ENCODE measurements at regions of chr13 and their contacts with region 1.

Region 1: GRCh38 chr13:31199849-31200636 is at the start of gene B3GLCT:
- DNase-seq: peak; percentile 84
- H3K4me3 Mint-ChIP-seq: peak within 1 kb of the TSS; percentile 77
- H3K27ac Mint-ChIP-seq: peak within 1 kb of the TSS; percentile 78
- H3K4me1 Mint-ChIP-seq: peaks cover 26% of the 10 kb centered on the region
- H3K27me3 Mint-ChIP-seq: no peaks in the 10 kb centered on the region
- total RNA-seq, gene B3GLCT: 2.6 to 2.8 TPM

Region 2: GRCh38 chr13:29595380-29596063 is 1604.5 kb before region 1 on chr13 and contains the start of gene SLC7A1:
- CTCF ChIA-PET with region 1: no interaction called
- POLR2A ChIA-PET with region 1: no interaction called
- intact Hi-C with region 1: loop called (anchors 10 kb)
- DNase-seq: peak; percentile 90
- H3K4me3 Mint-ChIP-seq: peak within 1 kb of the TSS; percentile 89
- H3K27ac Mint-ChIP-seq: peak within 1 kb of the TSS; percentile 97
- H3K4me1 Mint-ChIP-seq: peaks cover 45% of the 10 kb centered on the region
- H3K27me3 Mint-ChIP-seq: peaks cover 1% of the 10 kb centered on the region
- total RNA-seq, gene SLC7A1: 106 to 114 TPM

Region 3: DNA sequence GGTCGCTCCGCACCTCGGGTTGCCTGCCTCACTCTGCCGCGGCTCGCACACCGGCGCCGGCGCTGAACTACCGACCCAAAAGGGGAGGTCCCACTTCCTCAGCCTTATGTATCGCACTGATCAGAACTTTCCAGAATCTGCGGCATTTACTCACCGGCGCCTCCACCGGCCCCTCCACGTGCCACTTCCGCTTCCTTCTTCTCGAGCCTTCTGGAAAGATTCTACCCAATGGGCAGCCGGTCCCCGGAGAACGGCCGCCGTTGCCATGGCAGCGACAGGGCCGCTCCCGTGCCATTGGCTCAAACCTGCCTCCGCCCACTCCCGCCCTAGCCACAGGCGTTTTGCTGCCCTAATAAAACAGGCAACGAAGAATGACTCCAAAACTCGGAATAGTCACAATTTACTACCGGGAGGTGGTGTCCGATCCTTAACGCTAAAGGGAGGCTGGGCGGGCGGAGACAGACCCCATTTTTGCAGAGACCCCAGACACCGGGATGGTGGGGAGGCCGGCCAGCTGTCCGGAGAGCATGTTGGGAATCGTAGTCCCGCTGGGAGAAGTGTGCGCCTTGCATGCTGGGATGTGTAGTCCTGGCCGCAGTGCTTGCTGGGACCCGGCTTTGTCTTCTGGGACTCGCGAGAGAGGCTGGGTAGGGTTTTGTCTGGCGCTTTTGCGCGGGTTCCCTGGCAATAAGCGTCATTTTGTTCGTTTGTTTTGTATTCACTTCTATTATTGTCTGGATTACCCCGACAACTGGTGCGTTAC is 38.0 kb before region 1 on chr13 and contains the start of gene HSPH1:
- CTCF ChIA-PET with region 1: interaction called, 3 read pairs
- POLR2A ChIA-PET with region 1: no interaction called
- intact Hi-C with region 1: loop called (anchors 1 kb)
- DNase-seq: peak; percentile 99
- H3K4me3 Mint-ChIP-seq: peak within 1 kb of the TSS; percentile 92
- H3K27ac Mint-ChIP-seq: peak within 1 kb of the TSS; percentile 99
- H3K4me1 Mint-ChIP-seq: peaks cover 35% of the 10 kb centered on the region
- H3K27me3 Mint-ChIP-seq: no peaks in the 10 kb centered on the region
- total RNA-seq, gene HSPH1: 214 to 221 TPM

Region 4: DNA sequence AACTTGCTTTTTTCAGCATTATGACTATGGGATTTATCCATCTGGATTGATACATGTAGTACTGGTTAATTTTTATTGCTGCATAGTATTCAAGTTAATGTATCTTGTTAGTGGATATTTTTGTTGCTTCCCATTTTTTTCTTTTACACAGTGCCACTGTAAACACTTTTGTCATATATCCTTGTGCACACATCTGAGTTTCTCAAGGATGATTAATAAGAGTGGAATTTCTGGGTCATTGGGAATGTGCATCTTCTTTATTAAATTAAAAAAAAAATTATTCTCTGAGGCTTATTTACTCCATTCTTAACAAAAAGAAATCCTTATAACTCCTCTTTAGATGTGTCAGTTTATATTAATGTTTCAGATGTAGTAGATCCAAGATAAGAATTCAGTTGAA is 27.0 kb after region 1 on chr13:
- CTCF ChIA-PET with region 1: no interaction called
- POLR2A ChIA-PET with region 1: no interaction called
- intact Hi-C with region 1: no loop called
- DNase-seq: no peak
- H3K4me3 Mint-ChIP-seq: no peak overlapping the region
- H3K27ac Mint-ChIP-seq: no peak overlapping the region
- H3K4me1 Mint-ChIP-seq: no peaks in the 10 kb centered on the region
- H3K27me3 Mint-ChIP-seq: no peaks in the 10 kb centered on the region

Region 5: DNA sequence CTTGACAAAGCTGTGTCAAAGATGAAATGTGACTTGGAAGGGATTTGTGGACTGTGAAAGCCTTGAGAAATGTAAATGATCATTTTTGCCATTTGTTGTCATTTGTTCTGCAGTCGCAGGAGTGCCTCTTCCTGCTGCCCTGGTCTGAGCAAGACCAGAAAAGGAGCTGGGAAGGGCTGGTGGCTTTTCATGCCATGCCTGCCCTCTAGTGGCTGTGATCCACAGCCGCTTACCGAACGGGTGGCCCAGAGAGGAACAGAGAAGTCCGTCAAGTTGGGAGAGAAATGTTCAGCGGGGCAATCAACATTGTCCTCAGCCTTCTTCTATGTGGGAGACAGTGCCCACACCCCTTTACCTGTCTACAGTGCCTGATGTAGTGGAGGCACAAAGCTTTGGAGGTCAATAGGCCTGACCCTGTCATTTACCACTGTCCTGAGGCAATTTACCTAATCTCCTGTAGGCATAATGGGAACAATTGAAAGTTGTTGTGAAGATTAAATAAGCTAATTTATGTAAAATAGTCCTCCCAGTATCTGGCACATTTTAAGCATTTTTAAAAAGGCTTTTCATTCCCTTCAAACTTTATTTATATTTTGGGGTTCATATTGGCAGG is 224.2 kb after region 1 on chr13:
- CTCF ChIA-PET with region 1: interaction called, 3 read pairs
- POLR2A ChIA-PET with region 1: no interaction called
- intact Hi-C with region 1: loop called (anchors 1 kb)
- DNase-seq: peak; percentile 78
- H3K4me3 Mint-ChIP-seq: no peak overlapping the region
- H3K27ac Mint-ChIP-seq: no peak overlapping the region
- H3K4me1 Mint-ChIP-seq: peaks cover 4% of the 10 kb centered on the region
- H3K27me3 Mint-ChIP-seq: peaks cover 5% of the 10 kb centered on the region

Region 6: GRCh38 chr13:31742097-31742734 is 542.2 kb after region 1 on chr13:
- CTCF ChIA-PET with region 1: no interaction called
- POLR2A ChIA-PET with region 1: no interaction called
- intact Hi-C with region 1: loop called (anchors 1 kb)
- DNase-seq: peak; percentile 70
- H3K4me3 Mint-ChIP-seq: no peak overlapping the region
- H3K27ac Mint-ChIP-seq: no peak overlapping the region
- H3K4me1 Mint-ChIP-seq: peaks cover 4% of the 10 kb centered on the region
- H3K27me3 Mint-ChIP-seq: peaks cover 6% of the 10 kb centered on the region

Measured in activated CD4-positive, alpha-beta memory T cell treated with anti-CD3 and anti-CD28 coated beads for 36 hours (primary cell).